ENCODE measurements at regions of chr13 and their contacts with region 1.

Region 1: GRCh38 chr13:32905063-32905863 is 111.0 kb upstream of the KL start:
- DNase-seq: no peak
- ATAC-seq: no peak
- H3K4me3 ChIP-seq: no peak overlapping the region
- H3K27ac ChIP-seq: peak overlapping the region in 6 of 10 donors; percentile 0 to 64 (median 37)
- H3K4me1 ChIP-seq: peaks cover 0 to 19% (median 3%) of the 10 kb centered on the region in 9 donors
- H3K27me3 ChIP-seq: no peaks in the 10 kb centered on the region
- CTCF ChIP-seq: no peak

Region 2: DNA sequence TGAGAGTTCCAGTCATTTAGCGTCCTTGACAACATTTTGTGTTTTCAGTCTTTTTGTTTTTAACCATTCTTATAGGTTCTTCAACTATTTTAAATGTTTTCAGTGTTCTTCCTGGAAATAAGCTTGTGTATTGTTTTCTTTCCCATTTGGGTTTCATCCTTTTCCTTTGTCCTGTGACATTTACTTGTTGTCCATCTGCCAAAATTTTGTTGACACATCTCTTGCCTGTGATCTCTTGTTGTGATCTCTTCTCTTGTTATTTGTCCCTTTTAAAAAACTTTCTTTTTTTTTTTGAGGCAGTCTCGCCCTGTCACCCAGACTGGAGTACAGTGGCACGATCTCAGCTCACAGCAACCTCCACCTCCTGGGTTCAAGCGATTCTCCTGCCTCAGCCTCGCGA is 222.5 kb before region 1 on chr13:
- intact Hi-C with region 1: loop called in 1 of 10 experiments (anchors 10 kb)
- DNase-seq: no peak
- ATAC-seq: no peak
- H3K4me3 ChIP-seq: no peak overlapping the region
- H3K27ac ChIP-seq: no peak overlapping the region
- H3K4me1 ChIP-seq: no peaks in the 10 kb centered on the region
- H3K27me3 ChIP-seq: no peaks in the 10 kb centered on the region
- CTCF ChIP-seq: no peak

Region 3: DNA sequence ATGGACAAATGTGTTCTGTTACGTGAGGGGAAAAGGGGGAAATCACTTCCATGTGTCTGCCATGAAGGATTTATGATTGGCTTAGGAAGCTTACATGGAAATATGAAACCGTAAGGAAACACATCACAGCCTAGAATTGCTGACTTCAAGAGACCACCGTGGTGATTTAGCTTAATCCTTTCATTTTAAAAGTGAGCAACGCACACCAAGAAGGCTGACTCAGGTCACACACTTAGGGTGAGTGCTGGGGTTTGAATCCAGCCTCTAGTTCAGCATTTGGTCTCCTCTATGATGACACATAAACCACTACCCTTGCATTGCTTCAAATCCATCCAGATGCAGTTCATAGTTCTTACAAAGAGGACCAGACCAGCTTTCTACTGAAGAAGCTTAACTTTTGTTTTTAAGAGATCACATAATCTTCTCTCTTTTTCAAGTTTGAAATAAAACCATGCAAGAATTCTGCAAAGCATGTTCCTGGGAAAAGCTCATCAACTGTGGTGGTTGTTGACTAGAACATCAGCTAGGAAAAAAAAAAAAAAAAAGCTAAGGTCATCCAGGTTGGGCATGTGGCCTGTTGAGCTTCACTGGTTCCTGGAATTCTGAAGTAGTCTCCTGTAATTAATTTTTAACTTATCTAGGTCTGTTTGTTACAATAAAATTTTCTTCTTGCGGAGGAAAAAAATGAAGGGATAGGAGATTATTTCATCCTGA is 50.8 kb after region 1 on chr13:
- intact Hi-C with region 1: no loop called
- DNase-seq: no peak
- ATAC-seq: no peak
- H3K4me3 ChIP-seq: no peak overlapping the region
- H3K27ac ChIP-seq: no peak overlapping the region
- H3K4me1 ChIP-seq: no peaks in the 10 kb centered on the region
- H3K27me3 ChIP-seq: no peaks in the 10 kb centered on the region
- CTCF ChIP-seq: no peak

Measured in heart right ventricle (tissue), 16 donors.